GM18951 (cell line): ENCODE measurements at regions of chr4 and their contacts with region 1.

Region 1: GRCh38 chr4:71270901-71271300 is 67.9 kb upstream of the SLC4A4 start:
- POLR2A ChIP-seq: no peak

Region 2: DNA sequence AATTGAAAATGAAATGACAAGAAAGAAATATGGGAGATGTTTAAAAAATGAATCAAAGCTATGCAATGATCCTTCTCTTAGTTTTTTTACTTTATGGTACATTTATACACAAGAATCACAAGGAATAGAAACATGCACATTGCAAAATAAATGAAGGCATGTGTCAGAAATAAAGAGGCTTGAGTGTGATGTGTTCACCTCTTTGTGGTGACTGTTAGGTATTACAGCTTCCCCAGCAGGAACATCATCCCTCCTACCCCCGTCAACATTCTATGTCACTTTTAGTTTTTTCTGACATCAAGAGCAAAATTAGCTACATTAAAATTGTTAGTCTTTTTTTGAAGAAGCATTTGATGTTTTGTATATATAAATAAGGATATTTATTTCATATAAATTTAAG is 282.7 kb after region 1 on chr4:
- in situ Hi-C with region 1: loop called (anchors 10 kb)
- POLR2A ChIP-seq: no peak

Region 3: DNA sequence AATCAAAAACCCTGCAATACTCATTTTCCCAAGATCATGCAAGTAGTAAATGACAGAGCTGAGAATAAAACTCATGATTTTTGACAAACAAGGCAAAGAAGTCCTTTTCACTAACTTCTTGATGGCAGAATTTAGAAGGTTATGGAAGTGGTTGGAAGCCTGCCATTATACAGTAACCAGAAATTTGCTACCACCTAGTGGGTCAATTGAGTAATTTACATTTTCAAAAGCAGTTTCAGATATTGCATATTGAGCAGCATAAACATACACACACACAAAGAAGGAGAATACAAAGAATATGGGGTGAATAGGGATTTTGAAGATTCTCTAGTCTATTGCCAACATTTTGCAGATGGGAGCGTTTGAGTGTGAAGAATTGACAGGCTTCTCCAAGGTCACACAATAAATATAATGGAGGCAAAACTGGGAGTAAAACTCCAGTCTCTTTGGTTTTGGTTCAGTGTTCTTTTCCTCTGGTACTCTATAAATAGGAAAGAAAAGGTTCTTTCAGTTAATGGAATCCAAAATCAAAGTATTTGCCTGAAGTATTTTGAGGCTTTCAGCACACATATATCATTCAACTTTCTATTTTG is 442.8 kb after region 1 on chr4:
- in situ Hi-C with region 1: loop called (anchors 25 kb)
- POLR2A ChIP-seq: no peak